Posterior vena cava (tissue), 2 donors: ENCODE measurements at regions of chr7 and their contacts with region 1.

Region 1: GRCh38 chr7:118259115-118259514 is 34.6 kb downstream of the ANKRD7 start:
- DNase-seq: no peak

Region 2: GRCh38 chr7:118243695-118244094 is 15.4 kb before region 1 on chr7:
- intact Hi-C with region 1: loop called in 1 of 2 experiments (anchors 1 kb)
- DNase-seq: no peak